Ovary (tissue), 10 donors: ENCODE measurements at regions of chr6 and their contacts with region 1.

Region 1: DNA sequence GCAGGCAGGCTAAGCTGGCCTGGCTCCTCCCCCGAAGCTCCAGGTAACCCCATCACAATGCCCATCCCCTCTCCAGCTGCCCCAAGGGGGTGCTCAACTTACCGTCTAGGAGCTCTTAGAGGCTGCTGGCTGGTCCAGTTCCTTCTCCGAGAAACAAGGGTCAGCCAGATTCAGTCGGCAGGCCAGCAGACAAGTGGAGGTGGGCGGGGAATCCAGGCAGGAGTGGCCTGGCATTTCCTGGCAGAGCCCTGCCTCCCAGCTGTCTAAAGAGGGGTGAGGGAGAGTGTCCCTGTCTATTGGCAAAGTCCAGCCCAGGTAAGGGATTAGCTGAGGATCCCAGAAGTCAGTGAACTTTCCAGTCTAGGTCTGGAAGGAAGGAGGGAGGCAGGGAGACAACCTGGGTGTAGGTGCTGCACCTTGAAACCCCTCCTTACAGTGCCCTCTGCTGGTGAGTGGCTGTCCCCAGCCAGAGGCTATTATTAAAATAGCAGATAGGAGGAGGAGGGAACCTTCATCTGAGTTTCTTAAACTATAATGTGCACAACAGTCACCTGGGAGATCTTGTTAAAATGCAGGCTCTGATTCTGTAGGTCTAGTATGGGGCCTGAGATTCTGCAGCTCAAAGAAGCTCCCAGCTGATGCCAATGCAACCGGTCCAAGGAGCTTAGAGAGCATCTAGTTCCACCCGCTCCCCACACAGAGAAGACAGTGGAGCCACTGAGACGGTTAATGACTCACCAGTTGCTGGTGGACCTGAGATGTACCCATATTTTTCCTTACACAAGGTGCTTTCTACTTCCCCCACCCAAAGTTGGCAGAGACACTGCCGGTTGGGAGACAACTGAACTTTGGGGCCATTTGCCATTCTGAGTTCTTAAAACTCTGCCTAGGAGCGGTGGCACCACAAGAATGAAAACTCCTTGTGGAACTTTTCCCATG is at the start of gene UNC5CL:
- DNase-seq: no peak
- H3K4me3 ChIP-seq: no peak within 1 kb of the TSS
- H3K27ac ChIP-seq: no peak within 1 kb of the TSS
- H3K4me1 ChIP-seq: no peaks in the 10 kb centered on the region
- H3K27me3 ChIP-seq: no peaks in the 10 kb centered on the region
- CTCF ChIP-seq: no peak
- EP300 ChIP-seq: no peak
- POLR2A ChIP-seq: no peak
- total RNA-seq, gene UNC5CL: 0.69 to 2.1 (median 0.86) TPM

Region 2: DNA sequence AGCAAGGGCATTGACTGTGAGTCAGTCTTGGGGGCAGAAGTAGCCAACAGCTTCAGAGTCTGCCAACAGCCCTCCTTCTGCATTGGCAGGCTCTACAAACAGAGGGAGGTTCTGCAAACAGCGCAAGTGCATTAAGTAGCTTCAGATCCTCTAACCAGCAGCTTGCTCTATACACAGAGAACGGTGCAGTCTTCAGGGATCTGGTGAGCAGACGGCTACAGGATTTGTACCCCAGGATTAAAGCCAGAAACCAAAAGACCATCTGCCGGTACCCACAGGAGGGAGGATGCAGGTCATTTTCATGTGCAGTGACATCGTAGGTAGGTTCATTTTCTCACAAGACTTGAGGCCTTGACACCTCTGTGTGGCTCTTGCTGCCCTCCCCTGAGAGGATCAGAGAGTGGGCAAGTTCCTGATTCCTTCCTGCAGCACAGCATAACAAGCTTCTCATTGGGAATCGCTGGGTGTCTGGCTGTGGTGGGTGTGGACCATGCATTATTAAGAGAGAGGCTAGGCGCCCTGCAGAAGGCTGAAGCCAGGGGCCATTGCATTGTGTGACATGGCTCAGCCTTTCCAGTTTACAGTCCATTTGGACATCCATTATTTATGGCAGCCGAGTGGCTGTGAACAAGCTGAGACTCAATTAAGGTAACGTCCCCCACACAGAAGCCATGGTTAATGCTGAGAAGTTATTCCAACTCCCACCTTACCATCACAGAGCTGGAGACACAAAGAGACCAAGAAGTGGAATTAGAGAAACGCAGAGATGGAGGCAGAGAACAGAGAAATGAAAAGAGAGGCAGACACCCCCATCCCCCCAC is 702.2 kb before region 1 on chr6:
- intact Hi-C with region 1: loop called in 1 of 4 experiments (anchors 10 kb)
- DNase-seq: no peak
- H3K4me3 ChIP-seq: no peak overlapping the region
- H3K27ac ChIP-seq: no peak overlapping the region
- H3K4me1 ChIP-seq: no peaks in the 10 kb centered on the region
- H3K27me3 ChIP-seq: no peaks in the 10 kb centered on the region
- CTCF ChIP-seq: no peak
- EP300 ChIP-seq: no peak
- POLR2A ChIP-seq: no peak

Region 3: DNA sequence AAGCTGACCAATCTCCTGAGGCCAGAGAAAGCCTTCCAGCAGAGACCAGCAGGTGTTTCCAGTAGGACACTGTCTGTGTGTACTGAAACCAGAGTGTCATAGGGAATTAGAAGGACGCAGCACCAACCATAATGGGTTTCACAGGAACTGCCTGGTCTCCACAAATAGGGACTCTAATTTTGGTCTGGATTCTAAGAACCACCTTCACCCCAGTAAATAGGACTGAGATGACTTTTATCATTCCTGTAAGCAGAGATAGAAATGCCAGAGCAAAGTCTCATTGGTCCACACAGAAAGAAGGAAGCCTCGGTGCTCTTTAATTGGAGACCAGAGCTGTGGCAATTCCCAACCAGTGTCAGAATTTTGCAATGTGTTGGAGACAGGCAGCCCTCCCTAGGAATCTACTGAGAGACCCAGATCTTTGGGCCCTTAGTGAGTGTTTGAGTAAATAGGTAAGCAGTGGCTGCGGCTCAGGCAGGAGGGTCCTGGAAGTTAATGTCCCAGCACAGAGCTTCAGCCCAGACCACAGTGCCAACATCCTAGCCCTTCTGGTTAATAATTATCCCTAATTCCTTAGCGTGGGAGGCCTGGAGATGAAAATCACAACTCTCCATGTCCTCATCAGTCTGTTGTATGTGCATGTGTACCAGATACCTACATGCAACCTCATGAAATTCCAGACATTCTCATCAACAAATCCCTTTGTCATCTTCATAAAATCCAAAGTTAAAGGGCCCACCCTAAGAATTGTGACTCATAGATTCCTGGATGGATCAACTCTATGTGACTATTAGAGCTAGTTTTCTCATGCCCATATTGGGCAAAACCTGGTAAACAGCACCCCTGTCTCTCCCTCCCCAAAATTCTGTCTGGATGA is 81.5 kb before region 1 on chr6:
- intact Hi-C with region 1: no loop called
- DNase-seq: no peak
- H3K4me3 ChIP-seq: no peak overlapping the region
- H3K27ac ChIP-seq: no peak overlapping the region
- H3K4me1 ChIP-seq: peaks cover 1% of the 10 kb centered on the region
- H3K27me3 ChIP-seq: no peaks in the 10 kb centered on the region
- CTCF ChIP-seq: no peak
- EP300 ChIP-seq: no peak
- POLR2A ChIP-seq: no peak